Transverse colon (tissue), 4 donors: ENCODE measurements at regions of chr18 and their contacts with region 1.

Region 1: DNA sequence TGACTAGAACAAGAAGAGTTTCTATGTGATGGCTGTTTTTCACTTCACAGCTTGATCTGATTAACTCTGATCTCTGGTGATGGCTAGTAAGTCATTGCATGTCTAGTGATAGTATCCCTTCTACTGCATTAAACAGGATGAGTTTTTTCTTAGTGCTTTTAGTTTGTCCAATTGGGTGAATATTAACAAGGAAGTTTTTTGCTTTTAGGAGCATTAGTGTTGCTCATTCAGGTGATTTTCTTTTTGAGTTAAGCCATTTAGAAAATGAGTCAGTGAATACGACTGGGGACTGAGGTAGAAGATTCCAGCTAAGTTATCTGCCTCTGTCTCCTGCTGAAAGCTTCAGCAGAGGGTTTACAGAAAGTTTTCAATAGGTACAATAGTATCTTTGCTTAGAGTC is 306.7 kb downstream of the PIK3C3 start:
- DNase-seq: no peak
- H3K4me3 ChIP-seq: no peak overlapping the region
- H3K27ac ChIP-seq: no peak overlapping the region
- H3K4me1 ChIP-seq: no peaks in the 10 kb centered on the region
- H3K27me3 ChIP-seq: no peaks in the 10 kb centered on the region
- CTCF ChIP-seq: no peak
- EP300 ChIP-seq: no peak
- POLR2A ChIP-seq: no peak

Region 2: GRCh38 chr18:42072407-42072806 is 189.3 kb before region 1 on chr18:
- in situ Hi-C with region 1: no loop called
- intact Hi-C with region 1: no loop called
- DNase-seq: no peak
- H3K4me3 ChIP-seq: no peak overlapping the region
- H3K27ac ChIP-seq: no peak overlapping the region
- H3K4me1 ChIP-seq: peaks cover 0 to 4% (median 1%) of the 10 kb centered on the region in 4 donors
- H3K27me3 ChIP-seq: no peaks in the 10 kb centered on the region
- CTCF ChIP-seq: no peak
- EP300 ChIP-seq: no peak
- POLR2A ChIP-seq: no peak

Region 3: DNA sequence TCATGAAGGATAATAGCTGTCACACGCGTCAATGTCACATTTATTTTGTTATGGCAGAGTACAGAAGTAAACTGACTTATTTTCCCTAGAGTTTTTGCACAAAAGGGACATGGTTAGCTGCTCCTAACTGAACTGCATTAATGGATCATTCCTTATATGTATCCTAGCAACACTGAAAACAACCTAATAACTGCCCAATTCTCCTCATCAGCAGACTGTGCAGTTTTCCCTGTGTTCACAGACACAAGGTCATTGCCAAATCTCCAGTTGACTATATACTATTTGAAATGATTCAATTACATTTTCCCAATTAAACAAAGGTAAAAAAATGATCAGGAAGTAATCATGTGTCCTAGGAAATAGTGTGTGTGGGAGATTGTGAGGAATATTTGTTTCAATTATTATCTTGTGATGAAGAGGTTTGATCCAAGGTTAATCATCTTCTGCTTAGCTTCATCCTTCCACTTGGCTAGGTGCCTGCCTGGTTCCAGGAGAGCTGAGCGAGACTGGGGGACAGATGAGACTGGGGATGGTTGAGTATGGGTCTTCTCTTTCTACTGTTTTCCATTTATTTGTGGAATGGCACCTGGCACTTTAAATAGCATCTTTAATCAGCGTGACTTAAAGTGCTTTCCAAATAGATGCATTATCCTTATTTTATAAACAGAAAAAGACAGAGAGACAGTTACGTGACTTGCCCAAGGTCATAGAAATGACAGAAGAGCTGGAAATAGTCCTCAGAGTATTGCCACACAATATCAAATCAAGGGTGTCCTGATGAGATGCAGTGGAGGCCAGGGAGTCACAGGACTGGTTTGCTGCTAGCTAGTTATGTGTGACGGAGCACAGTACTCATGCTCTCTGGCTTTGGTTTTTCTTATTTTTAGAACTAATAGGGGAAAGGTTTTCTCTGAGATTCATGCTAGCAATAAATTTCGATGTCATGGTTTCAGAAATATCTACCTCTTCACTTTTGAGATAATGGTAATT is 28.9 kb after region 1 on chr18:
- in situ Hi-C with region 1: no loop called
- intact Hi-C with region 1: loop called (anchors 1 kb)
- DNase-seq: no peak
- H3K4me3 ChIP-seq: no peak overlapping the region
- H3K27ac ChIP-seq: no peak overlapping the region
- H3K4me1 ChIP-seq: no peaks in the 10 kb centered on the region
- H3K27me3 ChIP-seq: no peaks in the 10 kb centered on the region
- CTCF ChIP-seq: no peak
- EP300 ChIP-seq: no peak
- POLR2A ChIP-seq: no peak